Activated B cell treated with CpG ODN at 0.5 μM for 24 hours (primary cell): ENCODE measurements at regions of chr14 and their contacts with region 1.

Region 1: GRCh38 chr14:69818757-69819191 is 21.7 kb upstream of the SLC10A1 start:
- DNase-seq: peak; percentile 20
- ATAC-seq: peak; percentile 70
- H3K4me3 Mint-ChIP-seq: no peak overlapping the region
- H3K27ac Mint-ChIP-seq: no peak overlapping the region
- H3K4me1 Mint-ChIP-seq: peaks cover 4% of the 10 kb centered on the region
- H3K27me3 Mint-ChIP-seq: peaks cover 4% of the 10 kb centered on the region
- CTCF ChIP-seq: no peak

Region 2: DNA sequence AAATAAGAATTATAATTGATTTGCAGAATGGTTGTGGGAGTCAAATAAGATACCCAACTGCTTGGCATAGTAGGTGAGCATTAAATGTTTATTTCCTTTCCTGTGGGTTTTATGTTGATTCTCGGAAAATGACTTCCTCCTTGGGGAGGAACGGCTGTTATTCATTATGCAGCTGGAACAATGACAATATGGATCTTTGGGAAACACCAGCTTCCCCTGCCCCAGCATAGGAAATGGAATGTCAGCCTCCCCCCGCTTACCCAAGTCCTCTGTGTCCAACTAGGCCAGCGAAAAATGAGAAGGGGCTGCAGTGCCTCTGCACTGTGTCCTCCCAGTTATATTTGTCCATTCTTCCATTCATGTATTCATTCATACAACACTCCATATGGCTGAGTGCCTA is 232.4 kb before region 1 on chr14:
- CTCF ChIA-PET with region 1: no interaction called
- POLR2A ChIA-PET with region 1: no interaction called
- intact Hi-C with region 1: loop called (anchors 5 kb)
- DNase-seq: no peak
- ATAC-seq: no peak
- H3K4me3 Mint-ChIP-seq: no peak overlapping the region
- H3K27ac Mint-ChIP-seq: no peak overlapping the region
- H3K4me1 Mint-ChIP-seq: peaks cover 2% of the 10 kb centered on the region
- H3K27me3 Mint-ChIP-seq: peaks cover 4% of the 10 kb centered on the region
- CTCF ChIP-seq: no peak

Region 3: DNA sequence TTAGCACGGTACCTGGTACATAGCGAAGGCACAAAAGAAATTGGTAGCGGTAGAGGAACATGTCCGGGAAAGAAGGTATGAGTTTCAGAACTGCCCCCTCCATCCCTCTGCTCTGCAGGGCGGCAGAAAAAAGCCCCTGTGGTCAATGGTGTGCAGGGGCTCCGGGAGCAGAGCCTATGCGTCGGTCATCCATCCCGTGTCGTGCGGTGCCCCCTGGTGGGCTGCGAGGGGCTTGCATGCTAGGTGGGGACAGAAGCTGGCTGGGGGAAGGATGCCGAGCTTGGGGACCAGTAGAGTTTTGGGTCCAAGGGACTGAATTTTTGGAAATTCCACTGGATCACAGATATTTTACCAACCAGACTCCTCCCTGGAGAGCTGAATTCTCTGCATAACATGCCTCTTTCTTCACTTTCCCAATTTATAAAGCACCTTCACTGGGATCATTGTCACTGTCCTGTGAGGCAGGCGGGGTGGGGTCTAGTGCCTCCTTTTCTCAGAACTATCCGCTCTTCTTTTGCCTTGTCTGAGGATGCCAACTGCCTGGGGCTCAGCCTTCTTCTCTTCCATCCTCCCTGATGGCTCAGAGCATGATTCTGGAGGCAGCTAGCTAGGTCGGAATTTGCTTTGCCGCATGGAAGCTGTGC is 209.1 kb after region 1 on chr14:
- CTCF ChIA-PET with region 1: interaction called, 24 read pairs
- POLR2A ChIA-PET with region 1: no interaction called
- intact Hi-C with region 1: loop called (anchors 1 kb)
- DNase-seq: peak; percentile 55
- ATAC-seq: peak; percentile 47
- H3K4me3 Mint-ChIP-seq: no peak overlapping the region
- H3K27ac Mint-ChIP-seq: no peak overlapping the region
- H3K4me1 Mint-ChIP-seq: no peaks in the 10 kb centered on the region
- H3K27me3 Mint-ChIP-seq: peaks cover 4% of the 10 kb centered on the region
- CTCF ChIP-seq: peak; percentile 19

Region 4: GRCh38 chr14:70073924-70074566 is 255.3 kb after region 1 on chr14:
- CTCF ChIA-PET with region 1: interaction called, 13 read pairs
- POLR2A ChIA-PET with region 1: no interaction called
- intact Hi-C with region 1: loop called (anchors 1 kb)
- DNase-seq: no peak
- ATAC-seq: no peak
- H3K4me3 Mint-ChIP-seq: no peak overlapping the region
- H3K27ac Mint-ChIP-seq: no peak overlapping the region
- H3K4me1 Mint-ChIP-seq: no peaks in the 10 kb centered on the region
- H3K27me3 Mint-ChIP-seq: peaks cover 2% of the 10 kb centered on the region
- CTCF ChIP-seq: no peak

Region 5: DNA sequence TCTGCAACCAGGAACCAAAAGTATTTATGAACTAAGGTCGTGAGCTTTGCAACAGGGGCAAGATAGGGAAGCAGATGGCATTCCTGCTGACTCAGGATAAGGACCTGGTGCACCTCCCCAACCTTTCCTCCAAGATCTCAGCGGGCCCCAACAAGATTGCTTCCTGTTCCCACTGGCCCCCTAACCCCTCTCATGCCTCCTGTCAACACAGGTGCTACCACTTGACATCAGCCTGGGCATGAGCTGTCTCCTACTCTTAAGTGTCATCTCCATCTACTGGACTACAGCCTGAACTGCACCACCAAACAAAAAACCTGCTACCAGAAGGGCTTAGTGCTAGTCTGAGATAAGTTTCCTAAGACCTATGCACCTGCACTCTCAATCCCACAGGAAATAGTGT is 749.0 kb after region 1 on chr14:
- CTCF ChIA-PET with region 1: interaction called, 4 read pairs
- POLR2A ChIA-PET with region 1: no interaction called
- intact Hi-C with region 1: loop called (anchors 2 kb)
- DNase-seq: no peak
- ATAC-seq: no peak
- H3K4me3 Mint-ChIP-seq: no peak overlapping the region
- H3K27ac Mint-ChIP-seq: no peak overlapping the region
- H3K4me1 Mint-ChIP-seq: peaks cover 2% of the 10 kb centered on the region
- H3K27me3 Mint-ChIP-seq: no peaks in the 10 kb centered on the region
- CTCF ChIP-seq: no peak

Region 6: DNA sequence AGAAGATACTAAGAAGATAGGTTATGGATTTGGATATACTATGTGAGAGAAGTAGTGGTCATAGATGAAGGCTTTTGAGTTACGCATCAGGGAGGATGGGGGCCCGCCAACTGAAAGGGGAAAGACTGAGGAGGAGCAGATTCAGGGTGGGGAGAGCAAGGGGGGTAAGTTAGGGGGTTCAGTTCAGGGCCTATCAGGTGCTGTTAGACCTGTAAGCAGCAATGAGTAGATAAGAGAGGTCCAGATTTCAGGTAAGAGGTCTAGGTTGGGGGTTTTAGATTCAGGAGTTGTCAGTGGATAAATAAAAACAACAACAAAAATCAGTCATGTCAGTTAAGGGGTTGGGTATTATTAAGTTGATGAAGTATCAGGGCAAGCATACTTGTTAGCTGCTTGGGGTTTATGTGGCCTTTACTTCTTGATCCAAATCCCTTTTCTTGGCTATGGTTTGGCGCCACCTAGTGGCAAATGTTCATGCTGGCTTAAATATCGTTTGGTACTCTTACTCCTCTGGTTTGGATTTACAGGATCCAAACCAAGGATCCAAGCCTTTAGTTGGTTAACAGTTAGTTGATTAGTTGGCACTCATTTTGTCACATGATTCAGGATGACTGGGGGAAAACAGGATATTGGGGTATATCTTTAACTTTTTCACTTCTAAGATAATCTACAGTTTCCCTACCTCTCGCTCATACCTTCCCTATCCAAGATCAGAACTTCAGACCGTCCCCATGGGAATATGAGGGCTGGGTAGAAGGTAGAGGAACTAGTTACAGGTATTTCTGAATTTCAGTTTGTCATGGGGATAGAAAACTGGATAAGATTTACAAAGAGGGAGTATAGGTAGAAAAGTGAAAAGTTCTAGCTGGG is 1153.6 kb after region 1 on chr14:
- CTCF ChIA-PET with region 1: no interaction called
- POLR2A ChIA-PET with region 1: no interaction called
- intact Hi-C with region 1: loop called (anchors 1 kb)
- DNase-seq: peak; percentile 49
- ATAC-seq: peak; percentile 62
- H3K4me3 Mint-ChIP-seq: no peak overlapping the region
- H3K27ac Mint-ChIP-seq: no peak overlapping the region
- H3K4me1 Mint-ChIP-seq: peaks cover 5% of the 10 kb centered on the region
- H3K27me3 Mint-ChIP-seq: no peaks in the 10 kb centered on the region
- CTCF ChIP-seq: peak; percentile 59